ENCODE measurements at regions of chr12 and their contacts with region 1.

Region 1: DNA sequence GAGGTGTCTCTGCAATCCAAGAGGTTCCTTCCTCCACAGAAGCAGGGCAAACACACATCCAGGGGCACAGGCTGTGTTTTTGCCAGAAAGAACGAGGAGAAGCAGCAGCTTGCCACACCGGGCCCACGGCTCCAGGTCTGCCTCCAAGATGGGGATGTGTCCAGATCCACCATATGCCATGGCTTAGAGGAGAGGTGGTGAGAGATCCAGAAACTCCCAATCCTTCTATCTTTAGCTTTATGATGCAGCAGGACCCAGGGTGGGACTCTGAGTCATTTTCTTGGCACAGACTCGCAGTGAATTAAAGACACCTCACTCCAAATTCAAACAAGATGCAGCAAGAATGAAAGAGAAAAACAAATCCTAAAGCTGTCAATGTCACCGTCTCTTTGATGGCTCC is 481.4 kb upstream of the TMEM132C start:
- DNase-seq: no peak
- H3K4me3 ChIP-seq: no peak overlapping the region
- H3K27ac ChIP-seq: no peak overlapping the region
- H3K4me1 ChIP-seq: no peaks in the 10 kb centered on the region
- H3K27me3 ChIP-seq: peaks cover 0 to 1% (median 0%) of the 10 kb centered on the region in 4 experiments; a peak in 1 of 7 replicates
- CTCF ChIP-seq: no peak
- EP300 ChIP-seq: no peak
- POLR2A ChIP-seq: no peak
- RAD21 ChIP-seq: no peak

Region 2: DNA sequence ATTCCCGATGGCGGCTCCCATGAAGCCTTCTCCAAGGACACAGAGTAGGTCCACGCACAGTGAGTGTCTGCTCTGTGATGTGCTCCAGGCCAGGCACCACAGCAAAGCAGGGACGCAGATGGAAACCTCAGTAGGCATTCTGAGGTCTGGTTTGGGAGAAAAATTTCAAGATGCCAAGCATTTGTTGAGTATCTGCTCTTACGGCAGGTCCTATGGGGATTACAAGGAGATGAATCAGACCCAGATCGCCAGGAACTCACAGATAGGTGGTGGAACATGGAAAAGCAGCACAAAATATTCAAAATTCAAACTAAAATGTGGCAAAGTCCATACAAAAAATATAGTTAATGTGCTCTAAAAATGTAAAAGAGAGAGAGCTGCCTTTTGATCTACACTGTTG is 203.5 kb before region 1 on chr12:
- CTCF ChIA-PET with region 1: no interaction called
- POLR2A ChIA-PET with region 1: no interaction called
- DNase-seq: no peak
- H3K4me3 ChIP-seq: no peak overlapping the region
- H3K27ac ChIP-seq: no peak overlapping the region
- H3K4me1 ChIP-seq: no peaks in the 10 kb centered on the region
- H3K27me3 ChIP-seq: no peaks in the 10 kb centered on the region
- CTCF ChIP-seq: no peak
- EP300 ChIP-seq: no peak
- POLR2A ChIP-seq: no peak
- RAD21 ChIP-seq: no peak

Region 3: DNA sequence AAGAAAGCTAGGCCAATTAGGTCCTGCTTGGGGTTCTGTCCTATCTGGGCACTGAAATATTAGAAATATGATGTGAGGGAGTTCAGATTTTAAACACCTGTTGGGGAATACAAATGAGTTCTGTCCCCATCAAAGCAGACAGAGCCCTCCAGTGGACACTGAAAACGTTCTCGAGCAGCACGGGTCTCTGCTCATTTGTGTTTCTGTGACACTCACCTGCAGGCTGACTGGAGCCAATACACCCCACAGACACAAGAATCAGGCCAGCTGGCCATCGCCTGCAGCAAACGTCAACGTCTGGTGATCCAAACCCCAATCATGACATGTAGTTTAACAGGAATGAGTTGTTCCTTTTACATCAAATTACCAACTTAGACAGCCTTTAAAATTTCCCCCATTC is 12.0 kb before region 1 on chr12:
- CTCF ChIA-PET with region 1: interaction called, 15 read pairs
- POLR2A ChIA-PET with region 1: no interaction called
- DNase-seq: no peak
- H3K4me3 ChIP-seq: no peak overlapping the region
- H3K27ac ChIP-seq: no peak overlapping the region
- H3K4me1 ChIP-seq: peaks cover 0 to 5% (median 1%) of the 10 kb centered on the region in 4 experiments; a peak in 3 of 7 replicates
- H3K27me3 ChIP-seq: no peaks in the 10 kb centered on the region
- CTCF ChIP-seq: peak; percentile 59 to 97 (median 79)
- EP300 ChIP-seq: no peak
- POLR2A ChIP-seq: no peak
- RAD21 ChIP-seq: peak; percentile 67 to 76

Region 4: GRCh38 chr12:127803545-127803944 is 18.0 kb after region 1 on chr12:
- CTCF ChIA-PET with region 1: interaction called, 11 read pairs
- POLR2A ChIA-PET with region 1: no interaction called
- DNase-seq: no peak
- H3K4me3 ChIP-seq: no peak overlapping the region
- H3K27ac ChIP-seq: no peak overlapping the region
- H3K4me1 ChIP-seq: no peaks in the 10 kb centered on the region; a peak in 2 of 7 replicates
- H3K27me3 ChIP-seq: no peaks in the 10 kb centered on the region
- CTCF ChIP-seq: no peak
- EP300 ChIP-seq: no peak
- POLR2A ChIP-seq: no peak
- RAD21 ChIP-seq: no peak